Activated T-helper 2 cell treated with anti-CD3 and anti-CD28 coated beads, Interferon-gamma antibody, Interleukin-2, Interleukin-4, amounts not matched to agents 10 μg/mL and 5 μg/mL and 100 μg/mL, durations not matched to agents 14 hours and 24 hours and 36 hours (primary cell): ENCODE measurements at regions of chr15 and their contacts with region 1.

Region 1: DNA sequence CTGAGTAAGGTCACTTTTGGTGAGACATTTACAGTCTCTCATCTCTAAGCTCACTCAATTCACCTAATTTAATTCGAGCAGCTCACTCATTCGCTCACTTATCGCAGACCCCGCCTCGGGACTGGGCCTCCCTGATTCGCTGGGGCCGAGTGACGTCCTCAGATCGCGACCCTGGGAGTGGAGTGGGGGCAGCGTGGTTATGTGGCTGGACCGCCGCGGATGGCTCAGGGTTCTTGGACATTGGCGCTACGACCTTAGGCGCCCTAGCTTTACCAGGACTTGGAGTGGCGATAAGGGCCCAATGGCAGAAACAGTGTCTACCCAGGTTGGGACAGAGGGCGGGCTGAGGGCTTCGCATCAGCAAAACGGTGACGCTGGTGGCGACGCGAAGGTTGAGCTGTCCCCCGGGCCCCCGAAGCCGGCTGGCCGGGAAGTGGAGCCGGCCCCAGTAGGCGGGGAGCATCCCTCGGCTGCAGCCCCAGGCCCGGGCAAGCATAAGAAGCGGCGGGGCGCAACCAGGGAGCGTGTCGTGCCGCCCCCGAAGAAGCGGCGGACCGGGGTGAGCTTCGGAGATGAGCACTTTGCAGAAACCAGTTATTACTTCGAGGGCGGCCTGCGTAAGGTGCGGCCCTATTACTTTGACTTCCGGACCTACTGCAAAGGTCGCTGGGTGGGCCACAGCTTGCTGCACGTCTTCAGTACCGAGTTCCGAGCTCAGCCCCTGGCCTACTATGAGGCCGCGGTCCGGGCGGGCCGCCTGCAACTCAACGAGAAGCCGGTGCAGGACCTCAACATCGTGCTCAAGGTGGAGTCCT is at the start of gene RPUSD2:
- DNase-seq: peak; percentile 89
- H3K4me3 Mint-ChIP-seq: peak within 1 kb of the TSS; percentile 98
- H3K27ac Mint-ChIP-seq: peak within 1 kb of the TSS; percentile 98
- H3K4me1 Mint-ChIP-seq: peaks cover 32% of the 10 kb centered on the region
- H3K27me3 Mint-ChIP-seq: no peaks in the 10 kb centered on the region
- total RNA-seq, gene RPUSD2: 18.6 and 18.8 TPM in 2 replicates

Region 2: GRCh38 chr15:40421246-40422157 is 147.8 kb before region 1 on chr15:
- intact Hi-C with region 1: no loop called
- DNase-seq: peak; percentile 72
- H3K4me3 Mint-ChIP-seq: no peak overlapping the region
- H3K27ac Mint-ChIP-seq: no peak overlapping the region
- H3K4me1 Mint-ChIP-seq: no peaks in the 10 kb centered on the region
- H3K27me3 Mint-ChIP-seq: no peaks in the 10 kb centered on the region

Region 3: GRCh38 chr15:40440743-40441564 is 128.4 kb before region 1 on chr15 and contains the start of gene BAHD1:
- intact Hi-C with region 1: loop called (anchors 2 kb)
- DNase-seq: peak; percentile 94
- H3K4me3 Mint-ChIP-seq: peak within 1 kb of the TSS; percentile 91
- H3K27ac Mint-ChIP-seq: peak within 1 kb of the TSS; percentile 77
- H3K4me1 Mint-ChIP-seq: peaks cover 37% of the 10 kb centered on the region
- H3K27me3 Mint-ChIP-seq: peaks cover 52% of the 10 kb centered on the region
- total RNA-seq, gene BAHD1: 26.5 and 26.7 TPM in 2 replicates

Region 4: GRCh38 chr15:40593588-40594428 is 24.5 kb after region 1 on chr15 and contains the start of gene KNL1:
- intact Hi-C with region 1: loop called (anchors 1 kb)
- DNase-seq: peak; percentile 90
- H3K4me3 Mint-ChIP-seq: peak within 1 kb of the TSS; percentile 93
- H3K27ac Mint-ChIP-seq: peak within 1 kb of the TSS; percentile 99
- H3K4me1 Mint-ChIP-seq: peaks cover 24% of the 10 kb centered on the region
- H3K27me3 Mint-ChIP-seq: no peaks in the 10 kb centered on the region
- total RNA-seq, gene KNL1: 30.6 and 30.8 TPM in 2 replicates

Region 5: GRCh38 chr15:40894689-40895308 is 325.5 kb after region 1 on chr15:
- intact Hi-C with region 1: no loop called
- DNase-seq: peak; percentile 55
- H3K4me3 Mint-ChIP-seq: peak overlapping the region; percentile 100
- H3K27ac Mint-ChIP-seq: peak overlapping the region; percentile 97
- H3K4me1 Mint-ChIP-seq: peaks cover 20% of the 10 kb centered on the region
- H3K27me3 Mint-ChIP-seq: peaks cover 1% of the 10 kb centered on the region